Endothelial cell of umbilical vein (primary cell): ENCODE measurements at regions of chr18 and their contacts with region 1.

Region 1: GRCh38 chr18:67232406-67232805 is 284.1 kb downstream of the DSEL start:
- DNase-seq: peak; percentile 96
- H3K4me3 ChIP-seq: no peak overlapping the region
- H3K27ac ChIP-seq: peak overlapping the region; percentile 81
- H3K4me1 ChIP-seq: peaks cover 8% of the 10 kb centered on the region
- H3K27me3 ChIP-seq: no peaks in the 10 kb centered on the region
- CTCF ChIP-seq: no peak
- POLR2A ChIP-seq: no peak

Region 2: DNA sequence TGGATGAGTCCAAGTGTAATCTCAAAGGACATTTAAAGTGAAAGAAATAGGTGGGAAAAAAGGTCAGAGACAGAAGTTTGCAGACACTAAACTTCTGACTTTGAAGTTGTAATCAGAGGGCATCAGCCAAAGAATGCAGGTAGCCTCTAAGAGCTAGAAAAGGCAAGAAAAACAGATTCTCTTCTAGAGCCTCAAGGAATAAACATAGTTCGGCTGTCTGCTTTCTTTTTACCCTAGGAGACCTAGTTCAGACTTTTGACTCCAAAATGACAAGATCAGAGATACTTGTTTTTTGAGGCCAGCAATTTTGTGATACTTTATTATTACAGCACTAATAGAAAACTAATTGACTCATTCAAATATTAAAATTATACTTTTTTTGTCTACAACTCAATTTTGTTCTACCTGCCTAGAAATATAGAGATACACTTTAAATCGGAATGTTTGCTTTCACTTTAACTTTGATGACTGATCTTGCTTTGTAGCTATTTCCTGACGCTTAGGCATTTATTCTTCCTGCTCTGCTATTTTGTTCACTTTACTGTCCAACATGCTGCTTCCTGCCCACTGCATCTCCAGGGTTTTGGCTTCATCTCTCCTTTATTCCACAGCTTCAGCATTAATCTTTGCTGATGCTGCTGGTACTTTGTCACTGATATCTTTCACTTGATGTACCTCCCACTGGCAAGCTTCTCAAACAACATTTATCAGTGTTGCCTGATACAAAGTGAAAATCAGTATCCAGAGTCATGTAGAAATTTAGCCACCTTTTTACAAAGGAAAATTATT is 11.6 kb after region 1 on chr18:
- CTCF ChIA-PET with region 1: interaction called, 5 read pairs
- POLR2A ChIA-PET with region 1: no interaction called
- dilution Hi-C with region 1: no loop called
- intact Hi-C with region 1: loop called (anchors 1 kb)
- DNase-seq: peak; percentile 53
- H3K4me3 ChIP-seq: peak overlapping the region; percentile 9 to 77 (median 39)
- H3K27ac ChIP-seq: peak overlapping the region; percentile 87
- H3K4me1 ChIP-seq: peaks cover 14% of the 10 kb centered on the region
- H3K27me3 ChIP-seq: no peaks in the 10 kb centered on the region
- CTCF ChIP-seq: no peak
- POLR2A ChIP-seq: no peak

Region 3: DNA sequence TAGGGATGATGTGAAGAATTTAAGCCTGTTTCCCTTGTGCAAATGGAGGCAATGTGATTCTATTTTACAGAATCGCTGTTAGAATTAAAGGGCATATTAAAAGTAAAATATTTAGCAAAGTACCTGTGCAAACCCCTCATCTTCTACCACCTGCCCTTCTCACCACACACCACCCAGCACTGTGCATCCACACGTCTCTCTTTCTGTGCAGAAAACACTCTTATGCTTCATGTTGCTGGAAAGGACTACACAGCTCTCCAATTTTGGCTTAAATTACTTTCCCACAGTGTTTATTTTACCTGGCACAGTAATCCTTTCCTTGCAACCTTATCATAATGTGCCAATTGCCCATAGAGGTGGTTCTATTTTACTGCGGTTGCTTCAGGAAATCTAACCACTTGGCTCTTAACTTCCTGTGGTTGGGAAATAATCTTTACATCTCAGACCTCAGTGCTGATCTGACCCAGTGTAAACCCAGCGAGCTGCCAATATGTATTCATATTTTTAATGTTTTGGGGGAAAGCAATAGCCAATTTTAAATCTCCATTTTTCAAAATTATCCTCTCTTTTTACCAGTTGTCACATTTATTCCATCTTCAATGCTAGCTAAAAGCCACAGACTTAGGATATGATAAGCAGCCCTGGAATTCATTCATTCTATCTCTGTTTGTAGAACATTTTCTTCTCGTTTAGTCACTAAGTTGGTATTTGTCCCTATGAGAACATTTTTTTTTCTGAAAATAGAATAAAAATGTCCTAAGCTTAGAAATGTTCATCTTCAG is 33.2 kb after region 1 on chr18:
- CTCF ChIA-PET with region 1: no interaction called
- POLR2A ChIA-PET with region 1: no interaction called
- dilution Hi-C with region 1: no loop called
- intact Hi-C with region 1: loop called (anchors 1 kb)
- DNase-seq: peak; percentile 76
- H3K4me3 ChIP-seq: peak overlapping the region in 1 of 3 experiments; percentile 35
- H3K27ac ChIP-seq: peak overlapping the region; percentile 91
- H3K4me1 ChIP-seq: peaks cover 30% of the 10 kb centered on the region
- H3K27me3 ChIP-seq: no peaks in the 10 kb centered on the region
- CTCF ChIP-seq: no peak
- POLR2A ChIP-seq: peak; percentile 47

Region 4: DNA sequence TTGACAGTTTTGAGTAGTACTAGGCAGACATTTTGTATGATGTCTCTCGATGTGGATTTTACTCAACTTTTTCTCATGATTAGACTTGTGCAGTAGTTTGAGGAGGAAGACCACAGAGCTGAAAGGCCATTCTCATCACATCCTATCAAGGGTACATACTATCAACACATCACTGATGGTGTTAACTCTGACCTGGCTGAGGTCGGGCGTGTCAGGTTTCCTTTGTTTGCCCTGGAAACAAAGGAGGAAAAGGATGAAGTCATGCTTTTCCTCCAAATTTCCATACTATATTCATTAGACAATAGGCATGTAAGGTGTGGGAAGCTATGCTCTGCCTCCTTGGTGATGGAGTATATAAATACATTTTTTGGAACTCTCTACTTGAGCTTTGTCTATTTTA is 73.1 kb after region 1 on chr18:
- CTCF ChIA-PET with region 1: no interaction called
- POLR2A ChIA-PET with region 1: no interaction called
- dilution Hi-C with region 1: no loop called
- intact Hi-C with region 1: loop called (anchors 2 kb)
- DNase-seq: peak; percentile 65
- H3K4me3 ChIP-seq: no peak overlapping the region
- H3K27ac ChIP-seq: no peak overlapping the region
- H3K4me1 ChIP-seq: no peaks in the 10 kb centered on the region
- H3K27me3 ChIP-seq: no peaks in the 10 kb centered on the region
- CTCF ChIP-seq: no peak
- POLR2A ChIP-seq: no peak

Region 5: DNA sequence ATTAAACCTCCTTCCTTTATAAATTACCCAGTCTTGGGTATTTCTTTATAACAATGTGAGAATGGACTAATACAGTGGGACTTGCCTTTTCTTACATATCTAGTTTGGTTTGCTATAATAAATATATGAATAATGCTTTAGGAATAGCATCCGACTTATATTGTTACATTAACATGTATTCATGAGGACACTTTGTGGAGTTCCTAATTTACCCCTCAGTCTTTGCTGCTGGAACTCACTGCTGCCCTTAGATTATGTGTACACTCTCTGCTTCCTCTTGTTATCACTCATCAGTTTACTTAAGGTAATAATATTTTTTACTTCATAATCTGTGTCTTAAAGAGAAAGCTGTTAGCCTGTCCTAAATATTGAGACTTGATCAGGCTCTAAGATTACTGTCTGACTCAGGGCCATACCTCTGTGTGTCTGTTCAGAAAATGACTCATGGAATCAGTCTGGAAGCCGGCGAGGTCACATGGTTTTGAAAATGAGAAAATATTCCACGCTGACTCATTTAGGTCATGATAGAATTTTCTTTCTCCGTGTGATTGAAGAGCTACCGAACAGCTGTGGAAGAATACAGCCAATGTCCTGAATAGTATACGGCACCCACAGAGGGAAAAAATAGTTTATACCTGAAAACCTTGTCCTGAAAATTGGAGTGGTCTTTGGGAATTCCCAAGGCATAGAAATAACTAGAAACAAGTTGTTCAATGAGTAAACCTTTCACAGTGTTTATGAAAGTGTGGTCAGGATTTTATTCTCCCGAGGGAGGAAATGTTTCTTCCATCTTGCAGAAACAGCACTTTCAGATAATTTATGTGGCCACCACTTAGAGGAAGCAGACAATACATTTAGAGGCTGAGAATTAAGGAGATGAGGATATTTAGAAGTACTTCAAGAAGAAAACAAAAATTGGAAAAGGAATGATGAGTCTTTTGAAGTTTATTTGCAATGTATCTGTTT is 127.8 kb after region 1 on chr18:
- CTCF ChIA-PET with region 1: no interaction called
- POLR2A ChIA-PET with region 1: interaction called, 4 read pairs
- dilution Hi-C with region 1: no loop called
- intact Hi-C with region 1: loop called (anchors 5 kb)
- DNase-seq: peak; percentile 97
- H3K4me3 ChIP-seq: peak overlapping the region; percentile 1 to 64 (median 21)
- H3K27ac ChIP-seq: peak overlapping the region; percentile 78
- H3K4me1 ChIP-seq: peaks cover 16% of the 10 kb centered on the region
- H3K27me3 ChIP-seq: no peaks in the 10 kb centered on the region
- CTCF ChIP-seq: no peak
- POLR2A ChIP-seq: no peak